ENCODE measurements at regions of chr17 and their contacts with region 1.

Region 1: GRCh38 chr17:70661342-70662222 is 492.2 kb downstream of the KCNJ2 start:
- ATAC-seq: peak; percentile 32 to 95 (median 70)
- H3K4me3 ChIP-seq: no peak overlapping the region
- H3K27ac ChIP-seq: no peak overlapping the region
- H3K4me1 ChIP-seq: peaks cover 10% of the 10 kb centered on the region in 2 donors

Region 2: DNA sequence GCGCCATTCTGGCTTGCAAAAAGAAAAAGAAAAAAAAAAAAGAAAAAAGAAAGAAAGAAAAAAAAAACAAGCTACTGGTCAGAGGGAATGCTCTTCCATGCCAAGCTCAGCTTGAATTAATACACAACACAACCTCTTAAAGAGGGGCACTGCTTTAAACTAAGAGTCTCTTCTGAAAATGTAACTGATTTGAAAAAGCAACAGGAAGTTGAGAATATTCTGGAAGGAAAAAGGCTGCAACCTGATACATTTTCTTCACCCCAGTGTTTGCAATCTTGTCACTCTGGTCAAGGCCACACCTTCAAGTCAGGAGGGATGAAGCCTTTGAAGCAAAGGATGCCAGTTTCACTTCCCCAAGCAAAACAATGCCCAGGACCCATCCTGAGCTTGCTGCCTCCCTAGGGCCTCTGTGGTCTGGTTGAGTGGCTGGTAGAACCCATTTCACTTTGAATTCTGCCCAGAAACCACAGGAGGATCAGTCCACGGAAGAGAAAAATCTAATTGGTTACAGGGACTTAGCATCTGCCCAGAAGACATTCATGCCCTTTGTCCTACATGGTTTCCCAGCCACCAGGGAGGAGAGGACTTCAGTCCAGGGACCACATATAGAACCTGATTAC is 1848.9 kb after region 1 on chr17:
- in situ Hi-C with region 1: loop called in 1 of 9 experiments (anchors 25 kb)
- ATAC-seq: peak in 4 of 8 experiments; percentile 6 to 49 (median 34)
- H3K4me3 ChIP-seq: no peak overlapping the region
- H3K27ac ChIP-seq: no peak overlapping the region
- H3K4me1 ChIP-seq: peaks cover 24% of the 10 kb centered on the region in 2 donors